ENCODE measurements at regions of chr5 and their contacts with region 1.

Region 1: DNA sequence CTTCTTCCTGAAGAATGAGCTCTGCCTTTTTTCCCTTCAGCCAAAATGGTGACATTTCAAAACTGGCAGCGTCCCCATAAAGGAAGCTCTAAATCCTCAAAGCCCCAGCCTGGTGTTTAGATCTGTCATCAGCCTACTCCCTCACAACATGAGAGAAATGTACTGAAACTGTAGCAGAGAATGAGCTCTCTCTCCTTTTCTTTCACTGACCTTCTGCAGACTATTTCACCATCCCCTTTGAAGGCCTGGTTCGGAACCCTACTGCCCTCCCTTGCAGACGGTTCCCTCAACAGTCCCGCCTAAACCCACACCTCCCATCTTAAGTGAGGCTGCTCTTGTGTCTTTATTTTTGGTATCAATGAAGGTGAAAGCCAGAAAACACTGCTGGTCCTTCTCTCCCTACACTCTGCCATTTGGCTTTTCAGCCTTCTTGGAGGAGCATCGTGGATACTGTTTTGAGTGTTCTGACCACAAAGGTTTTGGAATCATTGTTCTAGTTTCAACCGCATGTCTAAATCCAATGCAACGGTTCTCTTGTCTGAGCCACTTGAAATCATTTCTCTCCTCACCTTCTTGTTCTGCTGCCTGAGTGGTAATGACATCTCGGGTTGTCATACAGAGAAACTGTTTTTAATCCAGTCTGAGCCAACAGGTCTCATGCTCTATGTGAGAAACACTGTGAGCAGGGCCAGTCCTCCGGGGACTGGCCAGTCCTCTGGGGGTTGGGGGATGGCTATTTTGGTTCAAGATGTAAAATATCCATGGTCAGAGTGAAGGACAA is 39.0 kb downstream of the ITK start:
- DNase-seq: peak in 1 of 9 donors; percentile 54
- ATAC-seq: no peak
- H3K4me3 ChIP-seq: no peak overlapping the region
- H3K4me3 Mint-ChIP-seq: peak overlapping the region in 9 of 10 donors; percentile 39 to 89 (median 65)
- H3K27ac ChIP-seq: peak overlapping the region; percentile 63
- H3K27ac Mint-ChIP-seq: peak overlapping the region; percentile 89 to 98 (median 94)
- H3K4me1 ChIP-seq: peaks cover 82 to 87% of the 10 kb centered on the region in 2 donors
- H3K4me1 Mint-ChIP-seq: peaks cover 54 to 94% (median 85%) of the 10 kb centered on the region in 7 donors
- H3K27me3 ChIP-seq: no peaks in the 10 kb centered on the region
- H3K27me3 Mint-ChIP-seq: no peaks in the 10 kb centered on the region

Region 2: DNA sequence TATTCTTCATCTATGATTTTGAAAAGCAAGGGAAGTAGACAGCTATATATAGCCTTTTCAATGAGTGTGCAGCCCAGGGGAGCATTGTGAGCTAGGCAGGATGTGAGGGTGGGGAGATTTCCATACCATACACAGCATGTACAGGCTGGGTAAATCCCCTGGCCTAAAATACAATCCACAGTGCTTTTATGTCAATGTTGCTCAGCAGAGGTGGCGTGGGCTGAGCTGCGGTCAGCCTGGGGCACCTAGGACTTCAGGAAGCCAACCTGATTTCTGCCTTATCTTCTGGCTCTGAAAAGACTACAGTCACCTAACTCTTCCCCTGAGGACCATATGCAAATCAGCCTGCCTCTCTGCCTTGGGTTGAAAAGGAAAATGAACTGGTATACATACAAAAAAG is 47.3 kb before region 1 on chr5:
- CTCF ChIA-PET with region 1: no interaction called
- POLR2A ChIA-PET with region 1: interaction called, 85 read pairs
- intact Hi-C with region 1: loop called in 1 of 2 experiments (anchors 1 kb)
- DNase-seq: peak; percentile 21 to 90 (median 75)
- ATAC-seq: peak; percentile 98
- H3K4me3 ChIP-seq: peak overlapping the region; percentile 33
- H3K4me3 Mint-ChIP-seq: peak overlapping the region; percentile 49 to 82 (median 73)
- H3K27ac ChIP-seq: peak overlapping the region; percentile 80
- H3K27ac Mint-ChIP-seq: peak overlapping the region; percentile 83 to 96 (median 94)
- H3K4me1 ChIP-seq: peaks cover 20 to 35% of the 10 kb centered on the region in 2 donors
- H3K4me1 Mint-ChIP-seq: peaks cover 33 to 91% (median 73%) of the 10 kb centered on the region in 7 donors
- H3K27me3 ChIP-seq: no peaks in the 10 kb centered on the region
- H3K27me3 Mint-ChIP-seq: no peaks in the 10 kb centered on the region

Region 3: GRCh38 chr5:157189223-157189622 is 30.5 kb before region 1 on chr5:
- CTCF ChIA-PET with region 1: interaction called, 17 read pairs
- POLR2A ChIA-PET with region 1: interaction called, 253 read pairs
- intact Hi-C with region 1: loop called in 1 of 2 experiments (anchors 1 kb)
- DNase-seq: no peak
- ATAC-seq: no peak
- H3K4me3 ChIP-seq: peak overlapping the region; percentile 68
- H3K4me3 Mint-ChIP-seq: peak overlapping the region; percentile 83 to 100 (median 96)
- H3K27ac ChIP-seq: peak overlapping the region; percentile 81
- H3K27ac Mint-ChIP-seq: peak overlapping the region; percentile 63 to 98 (median 91)
- H3K4me1 ChIP-seq: peaks cover 75 to 81% of the 10 kb centered on the region in 2 donors
- H3K4me1 Mint-ChIP-seq: peaks cover 56 to 94% (median 83%) of the 10 kb centered on the region in 7 donors
- H3K27me3 ChIP-seq: no peaks in the 10 kb centered on the region
- H3K27me3 Mint-ChIP-seq: no peaks in the 10 kb centered on the region

Region 4: DNA sequence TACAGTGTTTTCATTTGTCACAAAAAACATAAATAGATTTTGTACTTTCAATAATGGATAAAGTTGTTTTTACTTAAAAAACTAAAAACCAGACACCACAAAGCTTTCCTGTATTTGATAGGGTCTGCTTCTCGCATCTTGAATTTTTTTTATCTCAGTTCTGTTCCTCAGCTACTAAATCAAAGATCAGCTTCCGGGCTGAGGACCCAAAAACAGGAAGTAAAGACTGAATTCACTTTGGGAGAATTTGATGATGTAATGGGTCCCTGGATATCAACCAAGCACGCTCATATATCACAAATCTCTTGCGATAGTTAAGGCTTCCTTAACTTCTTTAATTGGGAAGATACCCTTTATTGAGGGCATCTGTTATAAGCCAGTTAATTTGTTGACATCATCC is 14.9 kb before region 1 on chr5:
- CTCF ChIA-PET with region 1: interaction called, 7 read pairs
- POLR2A ChIA-PET with region 1: interaction called, 253 read pairs
- intact Hi-C with region 1: loop called in 1 of 2 experiments (anchors 1 kb)
- DNase-seq: peak in 7 of 9 donors; percentile 44 to 84 (median 73)
- ATAC-seq: peak; percentile 69
- H3K4me3 ChIP-seq: peak overlapping the region; percentile 10
- H3K4me3 Mint-ChIP-seq: peak overlapping the region; percentile 7 to 93 (median 76)
- H3K27ac ChIP-seq: peak overlapping the region; percentile 64
- H3K27ac Mint-ChIP-seq: peak overlapping the region; percentile 79 to 98 (median 95)
- H3K4me1 ChIP-seq: peaks cover 77 to 87% of the 10 kb centered on the region in 2 donors
- H3K4me1 Mint-ChIP-seq: peaks cover 43 to 96% (median 90%) of the 10 kb centered on the region in 7 donors
- H3K27me3 ChIP-seq: no peaks in the 10 kb centered on the region
- H3K27me3 Mint-ChIP-seq: no peaks in the 10 kb centered on the region

Region 5: DNA sequence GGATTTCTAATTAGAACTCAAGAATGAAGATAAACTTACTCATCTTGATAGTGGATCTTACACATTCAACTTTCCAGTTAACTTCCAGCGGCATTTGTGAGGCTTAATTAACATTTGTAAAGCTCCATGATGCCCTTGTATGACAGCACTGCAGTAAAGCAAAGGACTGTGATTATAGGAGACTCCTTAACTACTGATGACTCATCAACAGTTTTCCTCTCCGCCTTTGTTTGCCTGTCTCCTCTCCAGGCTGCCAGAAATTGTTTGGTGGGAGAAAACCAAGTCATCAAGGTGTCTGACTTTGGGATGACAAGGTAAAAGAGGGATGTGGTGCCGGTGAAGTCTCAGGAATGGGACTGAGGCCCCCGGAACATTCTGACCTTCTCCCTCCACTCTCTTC is 25.8 kb after region 1 on chr5:
- CTCF ChIA-PET with region 1: interaction called, 3 read pairs
- POLR2A ChIA-PET with region 1: interaction called, 30 read pairs
- intact Hi-C with region 1: no loop called
- DNase-seq: no peak
- ATAC-seq: no peak
- H3K4me3 ChIP-seq: no peak overlapping the region
- H3K4me3 Mint-ChIP-seq: peak overlapping the region in 3 of 10 donors; percentile 23 to 75 (median 27)
- H3K27ac ChIP-seq: peak overlapping the region; percentile 36
- H3K27ac Mint-ChIP-seq: peak overlapping the region; percentile 63 to 98 (median 86)
- H3K4me1 ChIP-seq: peaks cover 45 to 67% of the 10 kb centered on the region in 2 donors
- H3K4me1 Mint-ChIP-seq: peaks cover 41 to 87% (median 81%) of the 10 kb centered on the region in 7 donors
- H3K27me3 ChIP-seq: no peaks in the 10 kb centered on the region
- H3K27me3 Mint-ChIP-seq: no peaks in the 10 kb centered on the region

Region 6: DNA sequence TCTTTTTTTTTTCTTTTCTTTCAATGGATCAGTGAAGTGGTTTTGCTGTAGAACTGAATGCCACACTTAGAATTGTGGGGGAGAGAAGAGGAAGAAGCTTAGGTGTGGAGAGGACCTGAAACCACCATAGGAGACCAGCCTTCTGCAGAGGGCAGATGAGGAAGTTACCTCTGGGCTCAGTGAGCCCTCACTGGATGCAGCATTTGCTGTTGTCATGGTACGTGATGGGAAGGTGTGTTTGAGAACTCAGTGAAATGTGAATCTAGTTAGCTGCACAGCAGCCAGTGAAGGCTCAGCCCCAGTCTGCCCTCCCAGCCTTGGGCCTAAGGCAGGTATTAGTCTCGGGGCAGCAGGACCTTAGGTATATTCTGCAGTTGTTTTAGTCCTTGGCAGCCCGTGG is 63.8 kb after region 1 on chr5:
- CTCF ChIA-PET with region 1: no interaction called
- POLR2A ChIA-PET with region 1: no interaction called
- intact Hi-C with region 1: no loop called
- DNase-seq: peak in 4 of 9 donors; percentile 21 to 45 (median 36)
- ATAC-seq: peak; percentile 91
- H3K4me3 ChIP-seq: no peak overlapping the region
- H3K4me3 Mint-ChIP-seq: peak overlapping the region; percentile 6 to 75 (median 60)
- H3K27ac ChIP-seq: peak overlapping the region; percentile 37
- H3K27ac Mint-ChIP-seq: peak overlapping the region; percentile 60 to 98 (median 84)
- H3K4me1 ChIP-seq: peaks cover 47 to 79% of the 10 kb centered on the region in 2 donors
- H3K4me1 Mint-ChIP-seq: peaks cover 62 to 93% (median 90%) of the 10 kb centered on the region in 7 donors
- H3K27me3 ChIP-seq: no peaks in the 10 kb centered on the region
- H3K27me3 Mint-ChIP-seq: no peaks in the 10 kb centered on the region

Region 7: GRCh38 chr5:157748760-157749461 is 529.2 kb after region 1 on chr5:
- CTCF ChIA-PET with region 1: no interaction called
- POLR2A ChIA-PET with region 1: no interaction called
- intact Hi-C with region 1: no loop called
- DNase-seq: no peak
- ATAC-seq: no peak
- H3K4me3 ChIP-seq: no peak overlapping the region
- H3K4me3 Mint-ChIP-seq: no peak overlapping the region
- H3K27ac ChIP-seq: no peak overlapping the region
- H3K27ac Mint-ChIP-seq: peak overlapping the region in 1 of 9 donors; percentile 59
- H3K4me1 ChIP-seq: peaks cover 8% of the 10 kb centered on the region in 2 donors
- H3K4me1 Mint-ChIP-seq: peaks cover 8 to 32% (median 17%) of the 10 kb centered on the region in 7 donors
- H3K27me3 ChIP-seq: no peaks in the 10 kb centered on the region
- H3K27me3 Mint-ChIP-seq: no peaks in the 10 kb centered on the region

Measured in naive thymus-derived CD4-positive, alpha-beta T cell (primary cell).